ENCODE measurements at regions of chrX and their contacts with region 1.

Region 1: GRCh38 chrX:53317365-53318069 is 36.1 kb upstream of the IQSEC2 start:
- DNase-seq: peak; percentile 89
- H3K4me3 Mint-ChIP-seq: no peak overlapping the region
- H3K27ac Mint-ChIP-seq: no peak overlapping the region
- H3K4me1 Mint-ChIP-seq: peaks cover 13% of the 10 kb centered on the region
- H3K27me3 Mint-ChIP-seq: peaks cover 32% of the 10 kb centered on the region

Region 2: GRCh38 chrX:52574416-52575275 is 742.9 kb before region 1 on chrX:
- intact Hi-C with region 1: no loop called
- DNase-seq: peak; percentile 67
- H3K4me3 Mint-ChIP-seq: no peak overlapping the region
- H3K27ac Mint-ChIP-seq: no peak overlapping the region
- H3K4me1 Mint-ChIP-seq: peaks cover 2% of the 10 kb centered on the region
- H3K27me3 Mint-ChIP-seq: peaks cover 5% of the 10 kb centered on the region

Region 3: DNA sequence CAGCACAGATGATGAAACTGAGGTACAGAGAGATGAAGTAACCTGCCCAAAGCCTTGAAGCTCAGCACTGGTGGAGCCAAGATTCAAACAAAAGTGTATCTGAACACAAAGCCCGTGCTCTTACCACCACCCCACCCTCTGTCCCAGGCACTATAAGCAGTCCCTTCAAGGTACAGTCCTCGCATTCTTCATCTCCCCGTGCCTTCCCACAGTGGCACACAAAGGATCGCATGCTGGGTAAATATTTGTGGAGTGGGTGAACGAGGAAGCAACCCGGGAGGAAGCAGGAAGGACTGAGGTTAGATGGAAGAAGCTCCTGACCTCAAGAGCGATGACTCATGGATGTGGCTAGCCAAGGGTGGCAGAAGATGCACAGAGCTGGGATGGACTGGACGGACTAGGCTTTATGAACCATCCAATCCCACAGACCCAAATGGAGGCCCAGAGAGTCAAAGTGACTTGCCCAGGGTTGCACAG is 54.6 kb before region 1 on chrX:
- intact Hi-C with region 1: no loop called
- DNase-seq: peak; percentile 60
- H3K4me3 Mint-ChIP-seq: peak overlapping the region; percentile 72
- H3K27ac Mint-ChIP-seq: peak overlapping the region; percentile 63
- H3K4me1 Mint-ChIP-seq: peaks cover 29% of the 10 kb centered on the region
- H3K27me3 Mint-ChIP-seq: peaks cover 13% of the 10 kb centered on the region

Region 4: DNA sequence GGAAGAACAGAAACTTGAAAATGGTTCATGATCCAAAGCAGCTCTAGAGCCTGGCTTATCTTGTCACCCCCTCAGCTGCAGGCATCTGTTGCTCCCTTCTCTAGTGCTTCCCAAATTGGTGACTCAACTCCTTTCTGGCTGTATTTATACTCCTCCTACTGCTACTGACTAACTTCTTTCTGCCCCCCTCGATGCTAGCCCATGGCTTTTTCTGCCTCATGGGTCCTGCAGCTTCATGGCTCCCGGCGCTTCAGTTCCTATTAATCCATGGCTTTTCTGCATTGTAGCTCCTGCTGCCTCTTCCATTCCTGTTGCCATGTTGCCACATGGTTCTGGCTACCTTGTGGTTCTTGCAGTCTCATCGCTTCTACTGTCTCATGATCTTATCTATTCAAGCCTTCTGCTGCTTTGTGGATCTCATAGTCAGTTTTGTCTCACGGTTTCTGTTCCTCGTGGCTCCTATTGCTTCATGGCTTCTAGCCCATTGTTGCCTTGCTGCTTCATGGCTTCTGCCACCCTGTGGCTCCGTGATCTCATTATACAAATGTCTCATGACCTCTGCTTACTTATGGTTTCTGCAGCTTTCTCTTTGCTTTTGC is 56.8 kb after region 1 on chrX:
- intact Hi-C with region 1: loop called (anchors 10 kb)
- DNase-seq: no peak
- H3K4me3 Mint-ChIP-seq: no peak overlapping the region
- H3K27ac Mint-ChIP-seq: no peak overlapping the region
- H3K4me1 Mint-ChIP-seq: no peaks in the 10 kb centered on the region
- H3K27me3 Mint-ChIP-seq: no peaks in the 10 kb centered on the region

Region 5: GRCh38 chrX:53433651-53434639 is 116.4 kb after region 1 on chrX and contains the start of gene HSD17B10:
- intact Hi-C with region 1: loop called (anchors 2 kb)
- DNase-seq: peak; percentile 96
- H3K4me3 Mint-ChIP-seq: peak within 1 kb of the TSS; percentile 98
- H3K27ac Mint-ChIP-seq: peak within 1 kb of the TSS; percentile 93
- H3K4me1 Mint-ChIP-seq: peaks cover 22% of the 10 kb centered on the region
- H3K27me3 Mint-ChIP-seq: no peaks in the 10 kb centered on the region
- total RNA-seq, gene HSD17B10: 148 and 165 TPM in 2 replicates

Region 6: GRCh38 chrX:53481816-53482465 is 164.4 kb after region 1 on chrX:
- intact Hi-C with region 1: loop called (anchors 10 kb)
- DNase-seq: peak; percentile 83
- H3K4me3 Mint-ChIP-seq: no peak overlapping the region
- H3K27ac Mint-ChIP-seq: no peak overlapping the region
- H3K4me1 Mint-ChIP-seq: no peaks in the 10 kb centered on the region
- H3K27me3 Mint-ChIP-seq: peaks cover 3% of the 10 kb centered on the region

Measured in activated CD4-positive, alpha-beta T cell treated with anti-CD3 and anti-CD28 coated beads, Interleukin-2, amount 10 ng/mL, durations not matched to agents 24 days and 14 days (primary cell).